K562 (cell line): ENCODE measurements at regions of chr3 and their contacts with region 1.

Region 1: GRCh38 chr3:107846279-107846852 is 244.5 kb downstream of the CD47 start:
- DNase-seq: peak; percentile 25 to 65 (median 37)
- ATAC-seq: peak; percentile 89
- H3K4me3 ChIP-seq: no peak overlapping the region
- H3K27ac ChIP-seq: no peak overlapping the region
- H3K4me1 ChIP-seq: no peaks in the 10 kb centered on the region
- H3K27me3 ChIP-seq: peaks cover 2 to 4% of the 10 kb centered on the region in 2 experiments; a peak in 4 of 5 replicates
- CTCF ChIP-seq: peak; percentile 61 to 69 (median 64)
- EP300 ChIP-seq: no peak
- POLR2A ChIP-seq: no peak
- RAD21 ChIP-seq: peak; percentile 41 to 70

Region 2: GRCh38 chr3:107574650-107575049 is 271.7 kb before region 1 on chr3:
- CTCF ChIA-PET with region 1: no interaction called
- POLR2A ChIA-PET with region 1: no interaction called
- in situ Hi-C with region 1: no loop called
- intact Hi-C with region 1: loop called (anchors 10 kb)
- DNase-seq: peak; percentile 8 to 34 (median 12)
- ATAC-seq: peak; percentile 77
- H3K4me3 ChIP-seq: no peak overlapping the region
- H3K27ac ChIP-seq: no peak overlapping the region
- H3K4me1 ChIP-seq: no peaks in the 10 kb centered on the region
- H3K27me3 ChIP-seq: no peaks in the 10 kb centered on the region
- CTCF ChIP-seq: peak; percentile 25 to 56 (median 35); a peak in 3 of 6 replicates
- EP300 ChIP-seq: no peak
- POLR2A ChIP-seq: no peak
- RAD21 ChIP-seq: peak; percentile 36 to 56; a peak in 3 of 4 replicates

Region 3: GRCh38 chr3:107676469-107677309 is 169.7 kb before region 1 on chr3:
- CTCF ChIA-PET with region 1: no interaction called
- POLR2A ChIA-PET with region 1: no interaction called
- in situ Hi-C with region 1: no loop called
- intact Hi-C with region 1: loop called (anchors 2 kb)
- DNase-seq: peak in 1 of 4 experiments; percentile 4
- ATAC-seq: no peak
- H3K4me3 ChIP-seq: no peak overlapping the region
- H3K27ac ChIP-seq: no peak overlapping the region
- H3K4me1 ChIP-seq: no peaks in the 10 kb centered on the region
- H3K27me3 ChIP-seq: no peaks in the 10 kb centered on the region
- CTCF ChIP-seq: peak in 2 of 3 experiments; percentile 34 to 52; a peak in 3 of 6 replicates
- EP300 ChIP-seq: no peak
- POLR2A ChIP-seq: no peak
- RAD21 ChIP-seq: peak; percentile 41 to 53; a peak in 3 of 4 replicates

Region 4: DNA sequence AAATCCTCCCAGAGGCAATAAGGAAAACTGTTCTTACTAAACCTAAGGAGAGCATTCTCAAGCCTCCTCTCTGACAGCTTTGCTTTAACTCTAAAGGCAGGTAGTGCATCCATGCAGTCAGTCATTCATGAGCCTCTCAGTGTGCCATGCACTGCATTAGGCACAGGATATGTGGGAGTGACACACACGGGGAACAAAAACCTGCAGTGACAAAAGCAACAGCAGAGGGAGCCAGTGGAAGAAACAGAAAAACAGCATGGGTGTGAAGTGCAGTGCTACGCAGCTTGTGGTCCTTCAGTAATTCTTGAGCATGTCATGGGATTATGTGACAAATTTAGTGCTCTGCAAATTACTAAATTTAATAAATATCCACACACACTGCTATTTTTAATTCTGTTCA is 92.9 kb before region 1 on chr3:
- CTCF ChIA-PET with region 1: no interaction called
- POLR2A ChIA-PET with region 1: no interaction called
- in situ Hi-C with region 1: no loop called
- intact Hi-C with region 1: loop called (anchors 2 kb)
- DNase-seq: peak in 2 of 4 experiments; percentile 5 to 39
- ATAC-seq: peak; percentile 88
- H3K4me3 ChIP-seq: no peak overlapping the region
- H3K27ac ChIP-seq: no peak overlapping the region
- H3K4me1 ChIP-seq: no peaks in the 10 kb centered on the region
- H3K27me3 ChIP-seq: no peaks in the 10 kb centered on the region
- CTCF ChIP-seq: peak; percentile 31 to 39 (median 38); a peak in 3 of 6 replicates
- EP300 ChIP-seq: no peak
- POLR2A ChIP-seq: no peak
- RAD21 ChIP-seq: peak in 1 of 2 experiments; percentile 38; a peak in 2 of 4 replicates

Region 5: GRCh38 chr3:107767897-107768605 is 78.3 kb before region 1 on chr3:
- CTCF ChIA-PET with region 1: no interaction called
- POLR2A ChIA-PET with region 1: no interaction called
- in situ Hi-C with region 1: no loop called
- intact Hi-C with region 1: no loop called
- DNase-seq: no peak
- ATAC-seq: no peak
- H3K4me3 ChIP-seq: no peak overlapping the region
- H3K27ac ChIP-seq: no peak overlapping the region
- H3K4me1 ChIP-seq: no peaks in the 10 kb centered on the region
- H3K27me3 ChIP-seq: no peaks in the 10 kb centered on the region
- CTCF ChIP-seq: no peak
- EP300 ChIP-seq: no peak
- POLR2A ChIP-seq: no peak
- RAD21 ChIP-seq: no peak